ENCODE measurements at regions of chr12 and their contacts with region 1.

Region 1: GRCh38 chr12:33708935-33709334 is 269.3 kb upstream of the SYT10 start:
- DNase-seq: no peak
- H3K4me3 ChIP-seq: no peak overlapping the region
- H3K27ac ChIP-seq: no peak overlapping the region
- H3K4me1 ChIP-seq: no peaks in the 10 kb centered on the region
- H3K27me3 ChIP-seq: peaks cover 2% of the 10 kb centered on the region
- CTCF ChIP-seq: no peak

Region 2: GRCh38 chr12:33676866-33677265 is 32.1 kb before region 1 on chr12:
- CTCF ChIA-PET with region 1: no interaction called
- dilution Hi-C with region 1: no loop called
- in situ Hi-C with region 1: no loop called
- intact Hi-C with region 1: loop called (anchors 2 kb)
- DNase-seq: no peak
- H3K4me3 ChIP-seq: no peak overlapping the region
- H3K27ac ChIP-seq: no peak overlapping the region
- H3K4me1 ChIP-seq: no peaks in the 10 kb centered on the region
- H3K27me3 ChIP-seq: no peaks in the 10 kb centered on the region
- CTCF ChIP-seq: no peak

Measured in mammary epithelial cell (primary cell).